CD8-positive, alpha-beta T cell (primary cell): ENCODE measurements at regions of chr9 and their contacts with region 1.

Region 1: GRCh38 chr9:29717631-29718030 is 2144.3 kb upstream of the C9orf72 start:
- DNase-seq: no peak
- ATAC-seq: no peak
- H3K4me3 ChIP-seq: no peak overlapping the region
- H3K4me3 Mint-ChIP-seq: no peak overlapping the region
- H3K27ac ChIP-seq: no peak overlapping the region
- H3K27ac Mint-ChIP-seq: no peak overlapping the region
- H3K4me1 ChIP-seq: no peaks in the 10 kb centered on the region
- H3K4me1 Mint-ChIP-seq: no peaks in the 10 kb centered on the region
- H3K27me3 ChIP-seq: no peaks in the 10 kb centered on the region
- H3K27me3 Mint-ChIP-seq: no peaks in the 10 kb centered on the region
- CTCF ChIP-seq: no peak

Region 2: DNA sequence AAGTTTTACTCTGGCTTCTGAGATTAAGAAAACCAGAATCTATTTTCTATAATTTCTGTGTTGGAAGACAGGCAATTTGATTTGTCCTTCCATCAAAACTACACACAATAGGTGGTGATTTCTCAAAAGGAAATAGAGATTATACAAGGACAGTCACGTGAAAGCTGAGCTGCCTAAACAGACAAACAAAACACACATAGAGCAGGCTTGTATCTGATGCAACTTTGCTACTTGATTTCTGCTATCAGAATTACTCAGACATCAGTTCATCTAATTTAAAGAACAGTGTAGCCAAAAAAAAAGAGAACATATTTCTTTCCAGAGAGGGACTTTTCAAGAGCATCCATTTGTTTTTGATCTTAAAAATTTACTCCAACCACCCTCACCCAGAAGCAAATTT is 16.1 kb before region 1 on chr9:
- CTCF ChIA-PET with region 1: no interaction called
- POLR2A ChIA-PET with region 1: no interaction called
- intact Hi-C with region 1: loop called in 1 of 2 experiments (anchors 1 kb)
- DNase-seq: no peak
- ATAC-seq: no peak
- H3K4me3 ChIP-seq: no peak overlapping the region
- H3K4me3 Mint-ChIP-seq: no peak overlapping the region
- H3K27ac ChIP-seq: no peak overlapping the region
- H3K27ac Mint-ChIP-seq: no peak overlapping the region
- H3K4me1 ChIP-seq: no peaks in the 10 kb centered on the region
- H3K4me1 Mint-ChIP-seq: no peaks in the 10 kb centered on the region
- H3K27me3 ChIP-seq: no peaks in the 10 kb centered on the region
- H3K27me3 Mint-ChIP-seq: no peaks in the 10 kb centered on the region
- CTCF ChIP-seq: no peak

Region 3: GRCh38 chr9:29778281-29778849 is 60.7 kb after region 1 on chr9:
- CTCF ChIA-PET with region 1: no interaction called
- POLR2A ChIA-PET with region 1: no interaction called
- intact Hi-C with region 1: no loop called
- DNase-seq: no peak
- ATAC-seq: no peak
- H3K4me3 ChIP-seq: no peak overlapping the region
- H3K4me3 Mint-ChIP-seq: no peak overlapping the region
- H3K27ac ChIP-seq: no peak overlapping the region
- H3K27ac Mint-ChIP-seq: no peak overlapping the region
- H3K4me1 ChIP-seq: no peaks in the 10 kb centered on the region
- H3K4me1 Mint-ChIP-seq: no peaks in the 10 kb centered on the region
- H3K27me3 ChIP-seq: no peaks in the 10 kb centered on the region
- H3K27me3 Mint-ChIP-seq: no peaks in the 10 kb centered on the region
- CTCF ChIP-seq: no peak